OCI-LY7 (cell line): ENCODE measurements at regions of chr6 and their contacts with region 1.

Region 1: DNA sequence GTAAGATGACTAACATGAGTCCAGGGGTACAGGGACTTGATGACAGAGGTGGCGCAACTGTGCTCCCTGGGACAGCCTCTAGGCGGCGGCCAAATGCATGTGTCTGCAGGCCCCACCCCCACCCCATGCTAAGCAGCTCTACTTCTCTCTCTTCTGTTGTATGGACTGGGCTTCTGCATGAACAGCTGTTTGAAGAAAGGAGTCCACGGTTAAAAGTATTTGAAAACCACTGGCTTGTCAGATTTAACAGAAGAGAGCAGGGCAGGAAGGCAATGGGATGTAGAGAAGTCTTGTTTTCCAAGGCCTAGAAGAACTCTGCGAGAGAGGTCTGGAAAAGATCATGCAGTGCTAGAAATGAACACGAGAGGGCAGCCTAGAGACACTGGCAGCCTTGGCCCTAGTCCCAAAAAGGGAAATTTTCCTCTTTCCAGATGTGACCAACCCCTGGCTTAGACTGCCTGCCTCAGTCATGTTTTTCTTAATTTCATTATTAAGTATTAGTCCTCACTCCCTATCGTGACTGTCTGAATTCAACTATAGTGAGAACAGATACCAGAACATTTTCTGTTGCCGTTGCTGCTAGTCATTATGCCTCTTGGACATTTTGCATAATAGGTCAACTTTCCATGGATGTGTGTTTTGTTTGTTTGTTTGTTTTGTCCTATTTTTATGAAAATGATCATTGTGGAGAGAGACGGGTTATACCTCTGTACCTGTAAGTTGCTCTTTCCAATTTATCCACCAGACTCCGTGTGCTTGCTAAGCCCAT is 265.0 kb downstream of the ADGRG6 start:
- DNase-seq: peak; percentile 43
- H3K4me3 ChIP-seq: no peak overlapping the region
- H3K27ac ChIP-seq: no peak overlapping the region
- H3K4me1 ChIP-seq: no peaks in the 10 kb centered on the region
- CTCF ChIP-seq: peak; percentile 90

Region 2: DNA sequence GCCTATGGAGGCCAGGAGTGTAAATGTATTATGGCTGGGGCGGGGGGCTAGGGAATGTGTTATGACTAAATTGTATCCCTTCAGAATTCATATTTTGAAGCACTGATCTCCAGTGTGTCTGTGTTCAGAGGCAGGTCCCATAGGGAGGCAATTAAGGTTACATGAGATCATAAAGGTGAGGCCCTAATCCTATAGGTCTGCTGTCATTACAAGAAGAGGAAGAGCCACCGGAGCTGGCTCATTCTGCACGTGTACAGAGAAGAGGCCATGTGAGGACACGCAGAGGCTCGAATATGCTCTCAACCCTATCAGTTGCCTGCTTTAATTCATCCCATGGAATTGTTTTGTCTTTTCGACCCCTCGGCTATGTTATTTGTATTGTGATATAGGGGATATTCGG is 342.9 kb before region 1 on chr6:
- CTCF ChIA-PET with region 1: no interaction called
- POLR2A ChIA-PET with region 1: no interaction called
- intact Hi-C with region 1: no loop called
- DNase-seq: no peak
- H3K4me3 ChIP-seq: no peak overlapping the region
- H3K27ac ChIP-seq: no peak overlapping the region
- H3K4me1 ChIP-seq: no peaks in the 10 kb centered on the region
- CTCF ChIP-seq: no peak

Region 3: DNA sequence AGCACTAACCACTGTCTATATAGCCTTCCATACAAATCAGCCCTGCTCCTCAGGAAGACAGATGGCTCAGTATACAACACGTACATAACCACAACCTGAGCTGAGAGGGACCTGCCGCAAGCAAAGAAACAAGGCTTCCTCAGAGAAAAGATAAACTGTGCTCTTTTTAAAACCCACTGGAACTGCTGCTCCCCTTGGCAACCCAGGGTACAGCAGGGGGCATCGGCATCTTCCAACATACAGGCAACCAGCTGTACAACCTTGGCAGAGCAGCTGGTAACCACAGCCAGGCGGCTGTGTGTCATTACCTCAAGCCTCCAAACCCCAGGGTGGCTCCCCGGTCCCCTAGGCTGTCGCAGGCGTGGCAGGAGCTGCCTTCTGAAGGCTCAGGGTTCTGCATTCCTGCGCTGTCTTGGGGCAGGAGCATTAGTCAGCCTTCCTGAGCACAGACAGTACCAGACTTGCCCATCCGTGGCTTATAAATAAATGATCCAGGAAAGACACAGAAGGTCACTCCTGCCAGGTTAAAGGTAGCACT is 15.5 kb before region 1 on chr6:
- CTCF ChIA-PET with region 1: no interaction called
- POLR2A ChIA-PET with region 1: no interaction called
- intact Hi-C with region 1: no loop called
- DNase-seq: no peak
- H3K4me3 ChIP-seq: no peak overlapping the region
- H3K27ac ChIP-seq: no peak overlapping the region
- H3K4me1 ChIP-seq: no peaks in the 10 kb centered on the region
- CTCF ChIP-seq: no peak

Region 4: GRCh38 chr6:143026696-143027449 is 460.1 kb after region 1 on chr6:
- CTCF ChIA-PET with region 1: no interaction called
- POLR2A ChIA-PET with region 1: no interaction called
- intact Hi-C with region 1: loop called (anchors 5 kb)
- DNase-seq: peak; percentile 56
- H3K4me3 ChIP-seq: no peak overlapping the region
- H3K27ac ChIP-seq: no peak overlapping the region
- H3K4me1 ChIP-seq: no peaks in the 10 kb centered on the region
- CTCF ChIP-seq: peak; percentile 92

Region 5: DNA sequence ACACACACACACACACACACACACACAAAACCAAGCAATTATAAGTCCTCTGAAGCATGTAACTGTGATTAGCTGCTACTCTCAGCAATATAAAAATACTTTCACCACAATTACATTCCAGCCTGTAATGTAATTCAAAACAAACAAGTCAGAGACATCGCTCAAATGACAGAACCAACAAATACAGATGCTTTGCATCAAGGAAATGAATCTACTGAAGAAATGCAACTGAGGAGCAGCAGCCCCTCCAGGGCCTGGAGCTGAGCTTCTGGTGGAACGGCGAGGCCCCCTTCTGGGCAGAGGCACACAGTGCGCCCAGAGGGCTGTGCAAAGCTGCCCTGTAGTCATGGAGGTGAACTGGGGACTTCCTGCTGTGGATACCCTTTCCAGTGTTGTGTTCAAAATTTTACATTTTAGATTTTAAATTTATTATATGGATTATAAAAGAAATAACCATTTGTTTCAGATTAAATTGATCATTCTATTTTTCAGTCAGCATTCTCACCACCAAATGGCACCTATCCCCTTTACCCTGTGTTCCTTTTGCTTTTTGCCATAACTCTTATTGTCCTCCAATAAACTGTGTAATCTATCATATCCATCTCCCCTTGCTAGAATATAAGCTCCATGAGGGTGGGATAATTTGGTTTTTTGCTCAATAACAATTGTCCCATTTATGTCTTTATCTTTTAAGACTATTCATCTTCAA is 860.5 kb after region 1 on chr6:
- CTCF ChIA-PET with region 1: no interaction called
- POLR2A ChIA-PET with region 1: no interaction called
- intact Hi-C with region 1: loop called (anchors 10 kb)
- DNase-seq: peak; percentile 65
- H3K4me3 ChIP-seq: no peak overlapping the region
- H3K27ac ChIP-seq: no peak overlapping the region
- H3K4me1 ChIP-seq: no peaks in the 10 kb centered on the region
- CTCF ChIP-seq: peak; percentile 87